ENCODE measurements at regions of chr6 and their contacts with region 1.

Region 1: GRCh38 chr6:31441365-31442267 is 38.2 kb downstream of the MICA start:
- DNase-seq: peak; percentile 18
- H3K4me3 ChIP-seq: peak overlapping the region in 1 of 4 donors; percentile 41
- H3K27ac ChIP-seq: no peak overlapping the region
- H3K4me1 ChIP-seq: peaks cover 0 to 7% (median 0%) of the 10 kb centered on the region in 3 donors
- H3K27me3 ChIP-seq: peaks cover 0 to 30% (median 0%) of the 10 kb centered on the region in 4 donors
- CTCF ChIP-seq: peak; percentile 53 to 87 (median 80)
- POLR2A ChIP-seq: no peak

Region 2: DNA sequence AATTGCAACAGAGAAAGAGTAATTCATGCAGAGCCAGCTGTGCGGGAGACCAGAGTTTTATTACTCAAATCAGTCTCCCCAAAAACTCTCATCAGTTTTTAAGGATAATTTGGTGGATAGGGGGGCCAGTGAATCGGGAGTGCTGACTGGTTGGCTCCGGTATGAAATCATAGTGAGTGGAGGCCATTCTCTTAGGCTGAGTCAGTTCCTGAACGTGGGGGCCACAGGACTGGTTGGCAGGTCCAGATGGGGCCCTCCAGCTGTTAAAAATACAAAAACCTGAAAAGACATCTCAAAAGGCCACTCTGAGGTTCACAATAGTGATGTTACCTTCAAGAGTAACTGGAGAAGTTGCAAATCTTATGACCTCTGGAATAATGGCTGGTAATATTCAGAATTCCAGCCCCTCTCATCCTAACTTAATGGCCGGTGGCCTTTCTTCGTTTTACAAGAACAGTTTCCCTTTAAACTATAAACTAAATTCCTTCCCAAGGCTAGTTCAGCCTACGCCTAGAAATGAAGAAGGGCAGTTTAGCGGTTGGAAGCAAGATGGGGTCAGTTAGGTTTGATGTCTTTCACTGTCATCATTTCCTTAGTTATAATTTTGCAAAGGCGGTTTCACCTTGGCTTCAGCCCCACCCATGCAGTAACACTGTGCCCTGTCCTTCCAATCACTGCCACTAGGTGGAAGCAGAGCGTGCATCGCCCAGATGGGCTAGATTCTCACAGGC is 45.0 kb before region 1 on chr6:
- intact Hi-C with region 1: loop called (anchors 2 kb)
- DNase-seq: no peak
- H3K4me3 ChIP-seq: no peak overlapping the region
- H3K27ac ChIP-seq: no peak overlapping the region
- H3K4me1 ChIP-seq: peaks cover 4 to 38% (median 16%) of the 10 kb centered on the region in 3 donors
- H3K27me3 ChIP-seq: no peaks in the 10 kb centered on the region
- CTCF ChIP-seq: peak; percentile 77 to 96 (median 90)
- POLR2A ChIP-seq: no peak